Mammary epithelial cell (primary cell): ENCODE measurements at regions of chr15 and their contacts with region 1.

Region 1: DNA sequence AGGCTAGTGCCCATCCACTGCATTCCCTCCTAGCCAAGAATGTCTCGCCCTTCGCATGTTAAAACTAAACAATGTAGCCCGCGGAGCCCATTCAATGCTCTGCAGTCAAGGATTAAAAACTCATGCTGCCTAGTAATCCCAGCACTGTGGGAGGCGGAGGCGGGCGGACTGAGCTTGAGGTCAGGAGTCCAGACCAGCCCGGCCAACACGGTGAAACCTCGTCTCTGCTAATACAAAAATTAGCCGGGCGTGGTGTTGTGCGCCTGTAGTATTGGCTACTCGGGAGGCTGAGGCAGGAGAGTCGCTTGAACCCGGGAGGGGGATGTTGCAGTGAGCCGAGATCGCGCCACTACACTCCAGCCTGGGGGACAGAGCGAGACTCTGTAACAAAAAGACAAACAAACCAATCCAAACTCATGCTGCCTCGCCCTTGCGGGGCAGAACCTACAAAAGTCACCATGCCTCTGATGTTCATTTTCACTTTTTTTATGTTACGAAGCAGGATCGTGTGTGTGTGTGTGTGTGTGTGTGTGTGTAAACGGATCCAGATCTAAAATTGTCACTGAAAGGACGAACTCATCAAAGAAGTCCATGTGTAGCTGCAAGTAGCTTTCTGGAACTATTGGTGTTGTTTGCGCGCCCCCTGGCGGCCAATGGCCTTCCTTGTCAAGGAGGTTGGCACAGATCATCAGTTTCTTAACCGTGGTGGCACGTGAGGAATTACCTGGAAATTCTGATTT is 54.8 kb upstream of the SPESP1 start:
- DNase-seq: peak; percentile 73
- H3K4me3 ChIP-seq: peak overlapping the region; percentile 9 to 26 (median 10)
- H3K27ac ChIP-seq: no peak overlapping the region
- H3K4me1 ChIP-seq: peaks cover 5% of the 10 kb centered on the region
- H3K27me3 ChIP-seq: no peaks in the 10 kb centered on the region
- CTCF ChIP-seq: peak; percentile 86 to 90

Region 2: DNA sequence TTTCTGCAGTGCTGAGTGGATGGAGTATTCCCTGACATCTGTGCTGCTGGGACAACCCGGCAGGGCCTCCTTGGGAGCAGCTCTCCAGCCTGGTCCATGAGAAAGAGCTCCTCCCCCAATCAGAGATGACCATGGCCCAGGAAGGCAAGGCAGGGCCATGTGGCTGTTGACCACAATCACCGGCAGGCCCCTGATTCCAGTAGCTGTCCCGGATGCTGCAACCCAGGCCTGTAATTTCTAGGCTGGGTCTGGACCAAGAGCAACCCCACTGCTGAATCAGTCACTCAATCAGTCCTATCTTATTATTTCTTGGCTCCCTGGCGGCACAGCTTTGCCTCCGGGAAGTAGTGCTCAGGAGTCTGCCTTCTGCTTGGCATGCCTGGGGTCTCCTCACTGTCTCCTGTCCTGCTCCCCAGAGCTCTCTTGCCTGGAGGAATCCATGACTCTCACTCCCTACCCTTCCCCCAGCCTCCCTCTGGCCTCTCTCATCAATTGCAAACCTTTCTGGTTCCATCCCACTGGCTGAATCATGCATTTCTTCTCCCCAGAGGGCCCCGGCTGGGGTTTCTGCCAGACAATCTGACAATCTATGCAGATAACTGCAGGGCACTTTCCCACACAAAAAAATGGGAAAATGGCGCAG is 411.0 kb before region 1 on chr15:
- CTCF ChIA-PET with region 1: no interaction called
- dilution Hi-C with region 1: no loop called
- in situ Hi-C with region 1: no loop called
- intact Hi-C with region 1: no loop called
- DNase-seq: no peak
- H3K4me3 ChIP-seq: no peak overlapping the region
- H3K27ac ChIP-seq: no peak overlapping the region
- H3K4me1 ChIP-seq: no peaks in the 10 kb centered on the region
- H3K27me3 ChIP-seq: no peaks in the 10 kb centered on the region
- CTCF ChIP-seq: no peak

Region 3: DNA sequence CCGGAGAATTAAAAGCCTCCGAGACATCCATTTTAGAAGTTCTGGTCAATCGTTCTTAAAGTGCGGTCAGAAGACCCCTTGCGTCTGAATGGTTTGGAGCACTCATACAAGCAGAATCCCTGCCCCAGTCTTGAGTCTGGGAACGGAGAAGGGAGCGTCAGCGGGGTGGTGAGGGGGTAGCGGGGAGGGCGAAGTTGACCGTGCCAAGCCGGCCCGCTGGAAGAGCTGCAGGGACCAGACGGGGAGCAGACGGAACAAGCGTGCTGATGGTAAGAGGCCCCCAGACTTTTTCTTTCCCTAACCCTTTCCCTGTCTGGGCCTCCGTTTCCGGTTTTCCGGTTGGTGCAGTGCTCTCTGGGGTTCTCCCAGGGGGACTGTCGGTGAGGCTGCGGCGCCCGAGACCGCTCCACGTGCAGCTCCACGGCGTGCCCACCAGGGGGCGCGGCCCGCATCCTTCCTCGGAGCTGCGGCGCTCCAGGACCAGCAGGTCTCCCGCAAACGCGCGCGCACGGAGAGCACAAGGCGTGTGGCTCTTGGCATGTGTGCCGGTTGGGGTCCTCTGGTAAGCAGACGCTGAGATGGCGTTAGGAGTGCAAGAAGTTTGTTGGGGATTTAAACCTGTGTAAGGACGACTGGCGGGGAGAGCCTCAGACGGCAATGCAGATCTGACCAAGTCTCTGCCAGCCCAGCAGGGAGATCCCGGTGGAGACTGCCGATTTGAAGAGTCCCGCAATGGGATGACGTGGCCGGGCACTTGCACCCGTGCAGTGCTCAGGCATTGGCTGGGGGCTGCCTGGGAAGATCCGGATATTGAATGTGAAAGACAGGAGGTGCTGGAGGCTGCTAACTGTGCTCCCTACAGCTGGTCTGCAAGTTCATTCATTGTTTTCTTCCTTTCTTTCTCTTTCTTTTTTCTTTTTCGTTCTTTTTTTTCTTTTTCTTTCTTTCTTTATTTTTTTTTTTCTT is 315.9 kb before region 1 on chr15:
- CTCF ChIA-PET with region 1: no interaction called
- dilution Hi-C with region 1: no loop called
- in situ Hi-C with region 1: loop called (anchors 5 to 10 kb)
- intact Hi-C with region 1: loop called (anchors 1 kb)
- DNase-seq: peak; percentile 57
- H3K4me3 ChIP-seq: peak overlapping the region; percentile 1 to 46 (median 38)
- H3K27ac ChIP-seq: no peak overlapping the region
- H3K4me1 ChIP-seq: peaks cover 20% of the 10 kb centered on the region
- H3K27me3 ChIP-seq: no peaks in the 10 kb centered on the region
- CTCF ChIP-seq: peak; percentile 72 to 96

Region 4: GRCh38 chr15:68730471-68730919 is 145.1 kb before region 1 on chr15:
- CTCF ChIA-PET with region 1: interaction called, 9 read pairs
- dilution Hi-C with region 1: no loop called
- in situ Hi-C with region 1: loop called (anchors 5 to 10 kb)
- intact Hi-C with region 1: loop called (anchors 1 kb)
- DNase-seq: peak; percentile 21
- H3K4me3 ChIP-seq: no peak overlapping the region
- H3K27ac ChIP-seq: no peak overlapping the region
- H3K4me1 ChIP-seq: no peaks in the 10 kb centered on the region
- H3K27me3 ChIP-seq: no peaks in the 10 kb centered on the region
- CTCF ChIP-seq: peak in 1 of 2 donors; percentile 72

Region 5: GRCh38 chr15:68820295-68821189 is 55.0 kb before region 1 on chr15 and contains the start of gene ANP32A:
- CTCF ChIA-PET with region 1: interaction called, 5 read pairs
- dilution Hi-C with region 1: no loop called
- in situ Hi-C with region 1: no loop called
- intact Hi-C with region 1: loop called (anchors 2 kb)
- DNase-seq: peak; percentile 96
- H3K4me3 ChIP-seq: peak within 1 kb of the TSS; percentile 78 to 95 (median 85)
- H3K27ac ChIP-seq: peak within 1 kb of the TSS; percentile 72
- H3K4me1 ChIP-seq: peaks cover 19% of the 10 kb centered on the region
- H3K27me3 ChIP-seq: no peaks in the 10 kb centered on the region
- CTCF ChIP-seq: no peak
- total RNA-seq, gene ANP32A: 42.5 to 109 TPM